Body of pancreas (tissue), 4 donors: ENCODE measurements at regions of chr6 and their contacts with region 1.

Region 1: DNA sequence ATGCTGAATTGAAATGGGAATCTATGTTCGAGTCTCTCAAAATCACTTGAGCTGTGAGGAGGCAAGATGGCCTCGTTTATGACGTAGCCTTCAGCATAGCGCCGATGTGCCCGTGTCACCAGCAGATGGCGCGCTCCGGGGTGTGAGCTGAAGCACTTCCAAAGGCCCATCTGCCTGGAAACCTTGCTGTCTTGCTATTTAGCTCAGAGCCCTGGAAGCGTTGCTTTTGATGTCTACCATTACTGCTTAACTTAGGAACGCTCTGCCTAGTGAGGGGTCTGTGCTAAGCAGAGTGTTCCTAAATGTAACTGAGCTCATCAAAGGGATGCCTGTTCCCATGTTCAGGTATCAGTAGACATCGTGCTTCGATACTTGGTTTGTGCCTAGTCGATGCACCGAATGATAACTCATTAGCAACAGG is 67.7 kb downstream of the SYCP2L start:
- DNase-seq: peak; percentile 68 to 80 (median 74)
- ATAC-seq: peak; percentile 87
- H3K4me3 ChIP-seq: no peak overlapping the region
- H3K27ac ChIP-seq: no peak overlapping the region
- H3K4me1 ChIP-seq: no peaks in the 10 kb centered on the region
- H3K27me3 ChIP-seq: no peaks in the 10 kb centered on the region
- CTCF ChIP-seq: peak; percentile 56 to 81 (median 71)
- POLR2A ChIP-seq: no peak

Region 2: GRCh38 chr6:11069760-11070159 is 115.2 kb after region 1 on chr6:
- intact Hi-C with region 1: loop called (anchors 5 kb)
- DNase-seq: no peak
- ATAC-seq: no peak
- H3K4me3 ChIP-seq: no peak overlapping the region
- H3K27ac ChIP-seq: no peak overlapping the region
- H3K4me1 ChIP-seq: peaks cover 16% of the 10 kb centered on the region
- H3K27me3 ChIP-seq: no peaks in the 10 kb centered on the region
- CTCF ChIP-seq: no peak
- POLR2A ChIP-seq: no peak